WTC11 (cell line): ENCODE measurements at regions of chr9 and their contacts with region 1.

Region 1: DNA sequence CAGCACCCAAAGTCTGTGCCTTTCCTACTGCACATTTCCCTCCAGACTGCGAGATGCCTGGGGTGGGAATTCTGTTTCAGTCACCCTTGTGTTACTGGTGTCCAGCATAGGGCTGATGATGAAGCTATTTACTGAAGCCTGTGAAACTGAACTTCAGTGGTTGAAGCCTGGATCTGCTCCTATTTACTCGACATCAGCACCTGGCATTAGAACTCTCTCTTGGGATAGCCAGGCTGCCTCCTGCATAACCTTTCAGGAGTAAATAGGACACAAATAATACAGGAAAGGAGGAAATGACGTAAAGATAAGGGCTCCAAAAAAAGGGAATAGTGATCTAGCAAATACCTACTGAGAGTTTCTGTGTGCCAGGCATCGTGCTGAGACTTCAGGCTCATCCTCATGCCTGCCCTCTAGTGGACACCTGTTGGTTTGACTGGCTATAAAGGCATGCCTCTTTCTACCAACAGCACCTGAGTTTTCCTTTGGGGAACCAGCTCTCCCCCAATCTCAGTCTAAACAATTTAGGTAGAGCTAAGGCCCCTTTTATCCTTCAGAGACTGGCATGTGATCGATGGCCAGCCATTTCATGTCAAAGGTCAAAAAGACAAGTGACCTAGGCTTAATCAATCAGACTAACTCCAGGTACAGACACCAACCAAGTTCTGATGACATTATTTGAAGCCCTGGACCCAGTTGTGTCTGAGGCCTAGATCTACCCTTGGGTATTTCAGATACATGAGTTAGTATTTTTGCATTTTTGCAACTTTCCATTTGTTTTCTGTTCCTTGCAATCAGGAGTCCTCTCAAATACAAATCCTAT is 192.1 kb upstream of the TRIM32 start:
- DNase-seq: peak; percentile 69
- ATAC-seq: peak; percentile 72
- H3K4me3 Mint-ChIP-seq: no peak overlapping the region
- H3K27ac Mint-ChIP-seq: no peak overlapping the region
- H3K4me1 Mint-ChIP-seq: peaks cover 39% of the 10 kb centered on the region
- H3K27me3 Mint-ChIP-seq: peaks cover 5% of the 10 kb centered on the region; the same call in 1 of the 2 replicates
- CTCF ChIP-seq: peak; percentile 61

Region 2: GRCh38 chr9:115591584-115591984 is 903.4 kb before region 1 on chr9:
- CTCF ChIA-PET with region 1: interaction called, 10 read pairs
- POLR2A ChIA-PET with region 1: no interaction called
- DNase-seq: peak; percentile 47
- ATAC-seq: peak; percentile 88
- H3K4me3 Mint-ChIP-seq: peak overlapping the region; percentile 54
- H3K27ac Mint-ChIP-seq: peak overlapping the region; percentile 94; the same call in 1 of the 2 replicates
- H3K4me1 Mint-ChIP-seq: peaks cover 25% of the 10 kb centered on the region
- H3K27me3 Mint-ChIP-seq: peaks cover 8% of the 10 kb centered on the region
- CTCF ChIP-seq: peak; percentile 72

Region 3: GRCh38 chr9:116149844-116150243 is 345.2 kb before region 1 on chr9:
- CTCF ChIA-PET with region 1: interaction called, 17 read pairs
- POLR2A ChIA-PET with region 1: no interaction called
- DNase-seq: peak; percentile 63
- ATAC-seq: peak; percentile 49
- H3K4me3 Mint-ChIP-seq: no peak overlapping the region
- H3K27ac Mint-ChIP-seq: no peak overlapping the region
- H3K4me1 Mint-ChIP-seq: peaks cover 12% of the 10 kb centered on the region
- H3K27me3 Mint-ChIP-seq: peaks cover 35% of the 10 kb centered on the region
- CTCF ChIP-seq: peak; percentile 83

Region 4: GRCh38 chr9:116471093-116471906 is 23.7 kb before region 1 on chr9:
- CTCF ChIA-PET with region 1: interaction called, 24 read pairs
- POLR2A ChIA-PET with region 1: interaction called, 3 read pairs
- DNase-seq: peak; percentile 81
- ATAC-seq: peak; percentile 98
- H3K4me3 Mint-ChIP-seq: peak overlapping the region; percentile 49
- H3K27ac Mint-ChIP-seq: peak overlapping the region; percentile 88
- H3K4me1 Mint-ChIP-seq: peaks cover 62% of the 10 kb centered on the region
- H3K27me3 Mint-ChIP-seq: no peaks in the 10 kb centered on the region
- CTCF ChIP-seq: no peak

Region 5: GRCh38 chr9:116572095-116572748 is 77.2 kb after region 1 on chr9:
- CTCF ChIA-PET with region 1: interaction called, 12 read pairs
- POLR2A ChIA-PET with region 1: no interaction called
- DNase-seq: peak; percentile 86
- ATAC-seq: peak; percentile 97
- H3K4me3 Mint-ChIP-seq: no peak overlapping the region
- H3K27ac Mint-ChIP-seq: no peak overlapping the region
- H3K4me1 Mint-ChIP-seq: peaks cover 13% of the 10 kb centered on the region; the same call in 1 of the 2 replicates
- H3K27me3 Mint-ChIP-seq: no peaks in the 10 kb centered on the region
- CTCF ChIP-seq: peak; percentile 88

Region 6: GRCh38 chr9:116806075-116806474 is 311.1 kb after region 1 on chr9:
- CTCF ChIA-PET with region 1: no interaction called
- POLR2A ChIA-PET with region 1: no interaction called
- DNase-seq: peak; percentile 46
- ATAC-seq: no peak
- H3K4me3 Mint-ChIP-seq: no peak overlapping the region
- H3K27ac Mint-ChIP-seq: no peak overlapping the region
- H3K4me1 Mint-ChIP-seq: peaks cover 7% of the 10 kb centered on the region
- H3K27me3 Mint-ChIP-seq: no peaks in the 10 kb centered on the region
- CTCF ChIP-seq: no peak